Head of caudate nucleus (tissue), 42 donors: ENCODE measurements at regions of chr7 and their contacts with region 1.

Region 1: DNA sequence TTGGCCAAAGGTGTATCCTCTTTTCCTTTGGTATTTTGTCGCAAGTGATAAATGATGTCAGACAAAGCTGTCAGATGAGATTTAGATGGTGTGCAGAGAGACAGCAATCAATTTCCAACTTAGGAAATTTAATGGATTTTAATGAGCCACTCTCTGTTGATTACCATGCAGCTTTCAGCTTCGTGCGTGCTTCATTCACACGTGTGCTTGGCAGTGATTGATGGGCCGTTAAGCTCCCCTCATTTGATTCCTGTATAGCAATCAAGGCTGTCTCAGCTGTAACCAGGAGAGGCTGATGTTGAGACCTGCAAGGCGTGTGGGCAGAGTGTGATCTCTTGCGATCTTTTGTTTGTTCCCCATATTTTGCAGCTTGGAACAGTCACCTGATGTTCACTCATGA is 439.6 kb downstream of the CALN1 start:
- DNase-seq: no peak

Region 2: DNA sequence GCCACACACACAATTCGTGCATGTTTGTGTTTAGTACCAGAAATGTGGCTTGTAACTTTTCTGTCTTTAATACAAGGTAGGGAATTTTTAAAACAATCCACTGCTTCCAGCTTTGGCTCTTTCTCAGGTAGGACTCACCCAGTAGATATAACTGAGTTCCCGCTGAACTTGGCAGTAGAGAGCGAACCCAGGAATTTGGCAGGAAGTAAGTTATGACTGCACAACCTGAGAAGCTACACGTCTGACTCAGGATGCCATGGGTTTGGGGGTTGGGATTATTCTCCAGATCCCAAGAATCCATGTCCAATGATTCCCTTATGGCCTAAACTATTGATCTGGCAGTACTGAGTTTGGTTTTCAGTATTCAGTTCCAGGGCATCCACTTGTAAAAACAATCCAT is 60.1 kb before region 1 on chr7:
- intact Hi-C with region 1: no loop called
- DNase-seq: no peak

Region 3: GRCh38 chr7:72403458-72404076 is 431.0 kb after region 1 on chr7:
- intact Hi-C with region 1: loop called (anchors 5 kb)
- DNase-seq: no peak